Gastrocnemius medialis (tissue), 4 donors: ENCODE measurements at regions of chr5 and their contacts with region 1.

Region 1: DNA sequence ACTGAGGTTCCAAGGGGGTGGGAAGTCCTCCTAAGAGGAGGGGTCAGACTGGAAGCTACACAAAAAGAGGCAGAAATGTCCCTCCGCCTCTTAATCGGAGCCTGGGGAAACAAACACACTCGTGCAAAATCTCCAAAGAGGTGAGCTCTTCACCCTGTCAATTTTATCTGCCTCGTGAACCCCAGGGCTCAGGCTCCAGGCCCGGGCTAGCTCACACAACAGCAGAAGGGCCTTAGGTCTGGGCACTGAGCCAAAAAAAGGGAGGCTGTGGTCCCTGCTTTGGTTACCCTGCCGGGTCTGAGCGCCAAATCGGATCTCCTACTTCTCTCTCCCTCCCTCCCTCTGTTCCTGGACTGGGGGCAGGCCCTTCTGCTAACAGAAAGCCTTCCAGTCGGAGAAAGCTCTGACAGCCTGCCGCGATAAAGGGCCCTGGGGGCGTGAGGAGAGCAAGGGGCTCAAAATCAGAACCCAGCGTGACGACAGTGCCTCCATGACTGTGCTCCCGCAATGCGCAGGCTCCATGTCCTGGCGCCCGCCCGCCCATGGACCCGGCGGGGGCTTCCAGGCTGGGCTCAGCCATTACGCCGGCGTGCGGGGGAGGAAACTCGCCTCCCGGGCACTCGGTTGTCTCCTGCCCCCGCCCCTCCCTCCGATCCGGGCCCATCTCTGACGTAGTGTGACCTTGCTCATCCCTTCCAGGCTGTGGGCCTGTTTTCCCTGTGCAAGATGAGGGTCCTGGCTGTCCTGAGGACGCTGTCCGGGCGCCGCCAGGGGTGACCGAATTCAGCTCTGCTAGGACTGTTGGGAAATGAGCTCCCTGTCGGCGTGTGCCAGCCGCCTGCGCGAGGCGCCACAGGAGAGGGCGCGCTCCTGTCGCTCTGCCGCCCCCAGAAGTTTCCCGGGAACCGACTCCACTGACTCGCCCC is 865 bp upstream of the SLC22A4 start:
- DNase-seq: peak; percentile 64 to 89
- ATAC-seq: peak; percentile 75
- H3K4me3 ChIP-seq: peak overlapping the region; percentile 57 to 72 (median 66)
- H3K27ac ChIP-seq: peak overlapping the region; percentile 93 to 98 (median 96)
- H3K4me1 ChIP-seq: peaks cover 36% of the 10 kb centered on the region in 2 donors
- H3K27me3 ChIP-seq: no peaks in the 10 kb centered on the region
- CTCF ChIP-seq: peak in 4 of 5 experiments; percentile 30 to 50 (median 45)
- POLR2A ChIP-seq: no peak

Region 2: DNA sequence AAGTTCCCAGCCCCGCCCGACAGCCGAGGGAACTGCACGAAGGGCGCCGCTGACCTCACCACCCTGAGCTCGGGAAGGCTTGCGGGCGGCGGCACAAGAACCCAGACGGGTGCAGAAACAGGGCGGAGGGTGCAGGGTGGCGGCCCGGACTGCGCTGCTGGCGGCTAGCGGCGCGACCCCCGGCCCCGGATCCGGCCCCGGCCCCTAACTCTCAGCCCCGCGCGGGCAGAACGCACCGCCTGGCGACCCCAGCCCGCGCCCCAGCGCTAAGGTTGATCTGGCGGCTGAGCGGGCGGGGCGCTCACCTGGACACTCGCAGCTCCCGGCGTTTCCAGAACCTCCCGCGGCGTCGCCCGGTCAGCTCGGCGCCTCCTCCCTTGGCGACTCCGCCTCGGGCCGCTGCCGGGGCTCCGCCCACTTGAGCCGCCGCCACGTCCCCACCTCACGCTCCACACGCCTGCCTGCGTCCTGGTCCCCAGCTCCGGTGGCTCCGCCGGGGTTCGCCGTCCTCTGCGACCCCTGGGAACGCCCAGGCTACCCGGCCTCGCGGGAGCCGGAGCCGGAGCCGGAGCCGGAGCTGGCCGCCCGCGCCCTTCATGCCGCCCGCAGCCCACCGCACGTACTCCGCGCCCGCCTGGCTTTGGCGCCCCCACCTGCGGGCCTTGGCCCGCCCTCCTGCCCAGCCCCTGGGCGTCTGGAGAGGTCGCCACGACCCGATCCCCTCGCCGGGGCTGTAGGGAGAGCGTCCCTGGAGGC is 65.7 kb before region 1 on chr5 and contains the start of gene P4HA2:
- in situ Hi-C with region 1: no loop called
- intact Hi-C with region 1: loop called (anchors 2 kb)
- DNase-seq: peak; percentile 64 to 78
- ATAC-seq: peak; percentile 81 to 91
- H3K4me3 ChIP-seq: peak within 1 kb of the TSS; percentile 67 to 80 (median 72)
- H3K27ac ChIP-seq: peak within 1 kb of the TSS; percentile 74 to 88 (median 84)
- H3K4me1 ChIP-seq: peaks cover 34 to 35% of the 10 kb centered on the region in 2 donors
- H3K27me3 ChIP-seq: no peaks in the 10 kb centered on the region
- CTCF ChIP-seq: peak in 3 of 5 experiments; percentile 18 to 26 (median 20)
- POLR2A ChIP-seq: peak; percentile 64 to 70
- total RNA-seq, gene P4HA2: 5.8 to 15.7 (median 10.3) TPM

Region 3: DNA sequence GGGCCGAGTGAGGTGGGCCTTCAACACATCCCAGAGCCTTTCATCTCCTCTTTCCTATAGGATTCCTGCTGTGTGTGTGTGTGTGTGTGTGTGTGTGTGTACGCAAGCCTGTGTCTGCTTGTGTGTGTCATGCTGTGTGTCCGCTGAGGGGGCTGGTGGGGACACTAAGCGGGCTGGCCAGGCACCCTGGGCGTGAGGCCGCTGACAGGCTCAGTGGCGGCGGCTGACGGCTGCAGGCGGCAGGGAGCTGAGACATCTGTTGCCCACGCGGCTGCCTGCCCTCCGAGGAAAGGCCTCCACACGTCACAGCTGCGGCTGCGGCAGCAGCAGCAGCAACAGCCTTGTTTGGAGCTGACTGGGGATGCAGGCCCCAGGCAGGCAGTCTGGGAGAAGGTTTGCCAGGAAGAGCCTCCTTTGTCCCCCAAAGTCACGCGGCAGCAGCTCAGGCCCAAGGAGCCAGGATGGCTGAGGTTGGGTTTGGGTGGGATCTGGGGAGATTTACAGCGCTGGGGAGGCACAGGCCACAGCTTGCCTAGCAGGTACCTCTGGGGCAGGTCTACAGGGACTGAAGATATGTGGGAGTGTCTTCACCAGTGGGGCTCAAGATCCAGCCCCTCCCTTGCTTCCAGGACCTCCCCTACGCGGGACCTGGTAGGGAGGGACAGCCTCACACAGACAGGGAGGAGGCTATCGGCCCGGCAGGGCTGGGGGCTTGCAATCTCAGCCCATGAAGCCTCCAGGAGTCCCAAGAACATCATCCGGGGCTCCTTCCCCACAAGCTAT is 34.1 kb before region 1 on chr5:
- in situ Hi-C with region 1: no loop called
- intact Hi-C with region 1: loop called (anchors 2 kb)
- DNase-seq: peak in 1 of 2 donors; percentile 47
- ATAC-seq: peak in 1 of 2 donors; percentile 29
- H3K4me3 ChIP-seq: peak overlapping the region; percentile 34 to 61 (median 56)
- H3K27ac ChIP-seq: peak overlapping the region; percentile 75 to 79 (median 76)
- H3K4me1 ChIP-seq: peaks cover 13 to 14% of the 10 kb centered on the region in 2 donors
- H3K27me3 ChIP-seq: peaks cover 0 to 6% (median 0%) of the 10 kb centered on the region in 3 donors
- CTCF ChIP-seq: no peak
- POLR2A ChIP-seq: peak in 1 of 2 donors; percentile 31

Region 4: DNA sequence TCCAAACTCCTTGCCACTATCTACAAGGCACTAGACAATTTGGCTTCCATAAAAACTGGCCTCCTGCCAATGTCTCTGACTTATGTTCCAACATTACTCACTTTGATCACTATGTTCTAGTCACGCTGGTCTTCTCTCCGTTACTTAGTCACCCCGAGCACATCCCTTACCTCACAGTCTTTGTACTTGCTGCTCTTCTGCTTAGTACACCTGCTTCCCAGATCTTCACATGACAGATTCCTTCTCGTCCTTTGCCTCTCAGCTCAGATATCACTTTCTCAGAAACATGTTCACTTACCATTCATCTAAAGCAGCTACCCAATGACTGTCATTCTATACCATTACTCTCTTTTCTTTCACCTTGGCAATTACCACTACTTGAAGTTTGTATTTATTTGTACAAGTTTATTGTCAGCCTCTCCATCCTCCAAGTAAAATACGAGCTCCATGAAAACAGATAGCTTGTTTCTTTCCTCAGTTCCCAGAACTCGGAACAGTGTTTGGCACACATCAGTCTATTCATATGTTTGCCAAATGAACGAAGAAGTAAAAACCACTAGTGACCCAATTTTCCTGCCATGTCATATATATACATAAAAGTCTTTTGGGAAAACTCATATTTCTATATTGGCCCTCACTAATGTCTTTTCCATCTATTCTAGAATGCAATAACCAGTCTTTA is 70.2 kb after region 1 on chr5:
- in situ Hi-C with region 1: no loop called
- intact Hi-C with region 1: loop called (anchors 5 kb)
- DNase-seq: peak; percentile 90 to 92
- ATAC-seq: peak; percentile 93 to 95
- H3K4me3 ChIP-seq: peak overlapping the region in 3 of 4 donors; percentile 7 to 15 (median 14)
- H3K27ac ChIP-seq: peak overlapping the region; percentile 92 to 99 (median 96)
- H3K4me1 ChIP-seq: peaks cover 31 to 52% of the 10 kb centered on the region in 2 donors
- H3K27me3 ChIP-seq: no peaks in the 10 kb centered on the region
- CTCF ChIP-seq: no peak
- POLR2A ChIP-seq: no peak

Region 5: GRCh38 chr5:132369474-132370180 is 76.3 kb after region 1 on chr5 and contains the start of gene SLC22A5:
- in situ Hi-C with region 1: no loop called
- intact Hi-C with region 1: loop called (anchors 2 kb)
- DNase-seq: peak; percentile 61 to 80
- ATAC-seq: peak; percentile 73 to 75
- H3K4me3 ChIP-seq: peak within 1 kb of the TSS; percentile 64 to 82 (median 78)
- H3K27ac ChIP-seq: peak within 1 kb of the TSS; percentile 92 to 99 (median 96)
- H3K4me1 ChIP-seq: peaks cover 33 to 36% of the 10 kb centered on the region in 2 donors
- H3K27me3 ChIP-seq: no peaks in the 10 kb centered on the region
- CTCF ChIP-seq: peak in 1 of 5 experiments; percentile 18
- POLR2A ChIP-seq: peak; percentile 93 to 95
- total RNA-seq, gene SLC22A5: 56.2 to 116 (median 79.2) TPM

Region 6: DNA sequence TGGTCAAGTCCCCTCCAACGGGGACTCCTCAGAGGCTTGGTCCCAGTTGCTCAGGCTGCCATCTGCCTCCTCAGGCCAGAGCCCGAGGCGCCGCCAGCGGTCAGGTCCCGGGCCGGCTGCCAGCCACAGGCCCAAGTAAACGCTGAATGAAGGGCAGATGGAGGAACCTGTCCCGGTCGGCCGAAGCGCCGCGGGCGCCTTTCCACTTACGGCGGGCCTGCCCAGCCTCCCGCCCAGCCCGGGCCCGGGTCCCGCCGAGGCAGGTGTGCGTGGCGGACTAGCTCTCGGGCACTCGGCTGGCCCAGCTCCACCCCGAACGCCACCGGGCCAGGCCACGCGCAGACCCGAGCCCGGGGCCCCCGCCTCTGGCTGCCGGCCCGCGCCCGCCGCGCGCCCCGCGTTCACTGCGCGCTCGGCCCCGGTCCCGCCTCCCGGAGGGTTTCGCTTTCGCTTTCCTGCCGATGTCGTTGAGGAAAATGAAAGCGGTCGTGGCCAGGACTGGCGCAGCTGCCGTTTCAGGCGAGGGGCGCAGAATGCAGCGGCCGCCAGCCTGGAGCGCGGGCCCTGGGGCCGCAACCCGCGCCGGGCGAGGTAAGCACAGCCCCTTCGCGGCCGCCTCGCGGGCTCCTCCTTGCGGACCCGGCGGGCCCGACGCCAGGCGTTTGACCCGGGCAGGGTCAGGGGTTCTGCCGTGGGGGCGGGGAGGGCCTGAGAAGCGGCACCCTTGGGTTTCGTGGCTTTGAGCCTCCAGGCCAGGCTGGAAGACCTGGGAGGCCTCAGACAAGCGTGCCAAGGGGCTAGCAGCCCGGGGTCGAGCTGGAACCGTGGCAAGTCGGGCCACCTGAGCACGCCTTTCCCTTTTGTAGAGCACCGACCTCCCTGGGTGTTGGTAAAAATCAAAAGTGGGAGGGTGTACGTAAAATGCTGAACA is 117.4 kb after region 1 on chr5:
- in situ Hi-C with region 1: no loop called
- intact Hi-C with region 1: loop called (anchors 5 kb)
- DNase-seq: peak; percentile 69 to 90
- ATAC-seq: peak; percentile 70 to 75
- H3K4me3 ChIP-seq: peak overlapping the region; percentile 65 to 80 (median 68)
- H3K27ac ChIP-seq: peak overlapping the region; percentile 87 to 99 (median 94)
- H3K4me1 ChIP-seq: peaks cover 48 to 61% of the 10 kb centered on the region in 2 donors
- H3K27me3 ChIP-seq: no peaks in the 10 kb centered on the region
- CTCF ChIP-seq: peak; percentile 42 to 71 (median 60)
- POLR2A ChIP-seq: peak; percentile 72 to 74

Region 7: DNA sequence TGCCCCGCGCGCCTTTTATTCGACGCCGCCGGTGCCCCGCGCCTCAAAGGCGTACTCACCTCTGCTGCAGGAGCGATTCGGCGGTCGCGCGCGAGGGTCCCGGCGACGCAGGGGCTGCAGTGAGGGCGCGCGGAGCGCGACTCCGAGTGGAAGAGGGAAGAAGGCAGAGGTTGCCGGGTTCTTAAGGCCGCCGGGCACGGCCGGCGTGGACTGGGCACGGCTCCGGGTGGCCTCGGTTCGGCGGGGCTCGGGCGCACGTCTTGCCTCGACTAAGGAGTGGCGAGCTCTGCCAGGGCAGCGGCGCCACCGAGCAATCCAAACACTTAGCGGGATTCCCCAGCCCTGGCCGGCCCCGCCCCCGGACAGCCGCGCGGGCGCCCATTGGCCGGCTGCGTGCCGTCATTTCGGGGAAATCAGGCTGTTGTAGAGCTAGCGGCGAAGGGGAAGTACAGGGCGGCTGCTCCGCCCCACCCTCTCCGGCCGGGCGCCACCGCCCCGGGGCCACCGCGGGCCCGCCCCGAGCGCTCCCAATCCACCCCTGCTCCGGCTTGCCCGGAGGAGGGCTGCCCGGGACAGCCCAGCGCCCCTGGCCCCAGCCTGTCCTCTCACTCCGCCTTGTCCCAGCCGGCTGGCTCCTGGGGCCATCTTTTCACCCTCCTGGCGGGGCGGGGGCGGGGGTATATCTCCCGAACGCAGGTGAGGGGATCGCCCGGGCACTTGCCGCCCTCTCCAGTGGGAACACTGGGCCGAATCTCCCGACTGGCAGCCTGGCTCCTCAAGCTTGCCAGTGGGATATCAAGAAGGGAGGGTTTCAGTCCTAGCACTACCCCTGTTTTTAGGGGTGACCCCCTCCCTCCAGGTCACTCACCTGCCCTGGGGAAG is 197.4 kb after region 1 on chr5 and contains the start of gene IRF1:
- in situ Hi-C with region 1: no loop called
- intact Hi-C with region 1: loop called (anchors 2 kb)
- DNase-seq: peak; percentile 93 to 96
- ATAC-seq: peak; percentile 90 to 92
- H3K4me3 ChIP-seq: peak within 1 kb of the TSS; percentile 70 to 90 (median 84)
- H3K27ac ChIP-seq: peak within 1 kb of the TSS; percentile 86 to 95 (median 90)
- H3K4me1 ChIP-seq: peaks cover 36 to 40% of the 10 kb centered on the region in 2 donors
- H3K27me3 ChIP-seq: no peaks in the 10 kb centered on the region
- CTCF ChIP-seq: no peak
- POLR2A ChIP-seq: peak; percentile 96 to 97
- total RNA-seq, gene IRF1: 5.5 to 20.6 (median 8.4) TPM

Region 8: DNA sequence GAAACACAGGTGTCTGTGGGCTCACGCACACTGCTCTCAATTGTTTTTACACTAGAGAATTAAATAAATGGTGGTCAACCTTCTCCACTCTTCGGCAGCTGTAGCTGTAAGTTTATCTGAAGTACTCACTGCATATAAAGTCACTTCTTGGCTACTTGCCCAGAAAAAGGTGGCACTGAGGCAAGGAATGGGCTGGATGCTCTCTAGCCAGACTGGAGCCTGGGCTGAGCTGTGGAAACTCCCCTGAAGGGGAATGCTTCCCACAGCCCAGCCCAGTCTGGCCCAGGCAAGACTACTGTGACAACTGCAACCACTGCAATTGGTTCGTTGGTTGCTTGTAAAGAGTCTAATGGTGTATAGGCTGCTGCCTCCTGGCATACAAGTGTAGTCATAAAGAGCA is 584.6 kb after region 1 on chr5:
- in situ Hi-C with region 1: no loop called
- intact Hi-C with region 1: no loop called
- DNase-seq: peak; percentile 43 to 82
- ATAC-seq: peak; percentile 83 to 96
- H3K4me3 ChIP-seq: no peak overlapping the region
- H3K27ac ChIP-seq: peak overlapping the region; percentile 13 to 75 (median 52)
- H3K4me1 ChIP-seq: peaks cover 28 to 34% of the 10 kb centered on the region in 2 donors
- H3K27me3 ChIP-seq: no peaks in the 10 kb centered on the region
- CTCF ChIP-seq: no peak
- POLR2A ChIP-seq: no peak